Activated T-helper 1 cell treated with anti-CD3 and anti-CD28 coated beads, Interleukin-12 subunit alpha, Interleukin-12 subunit beta, Interleukin-2, Interleukin-4 antibody, amounts not matched to agents 30 ng/mL and 10 ng/mL and 1 ng/mL, durations not matched to agents 14 hours and 24 hours and 36 hours (primary cell): ENCODE measurements at regions of chr12 and their contacts with region 1.

Region 1: DNA sequence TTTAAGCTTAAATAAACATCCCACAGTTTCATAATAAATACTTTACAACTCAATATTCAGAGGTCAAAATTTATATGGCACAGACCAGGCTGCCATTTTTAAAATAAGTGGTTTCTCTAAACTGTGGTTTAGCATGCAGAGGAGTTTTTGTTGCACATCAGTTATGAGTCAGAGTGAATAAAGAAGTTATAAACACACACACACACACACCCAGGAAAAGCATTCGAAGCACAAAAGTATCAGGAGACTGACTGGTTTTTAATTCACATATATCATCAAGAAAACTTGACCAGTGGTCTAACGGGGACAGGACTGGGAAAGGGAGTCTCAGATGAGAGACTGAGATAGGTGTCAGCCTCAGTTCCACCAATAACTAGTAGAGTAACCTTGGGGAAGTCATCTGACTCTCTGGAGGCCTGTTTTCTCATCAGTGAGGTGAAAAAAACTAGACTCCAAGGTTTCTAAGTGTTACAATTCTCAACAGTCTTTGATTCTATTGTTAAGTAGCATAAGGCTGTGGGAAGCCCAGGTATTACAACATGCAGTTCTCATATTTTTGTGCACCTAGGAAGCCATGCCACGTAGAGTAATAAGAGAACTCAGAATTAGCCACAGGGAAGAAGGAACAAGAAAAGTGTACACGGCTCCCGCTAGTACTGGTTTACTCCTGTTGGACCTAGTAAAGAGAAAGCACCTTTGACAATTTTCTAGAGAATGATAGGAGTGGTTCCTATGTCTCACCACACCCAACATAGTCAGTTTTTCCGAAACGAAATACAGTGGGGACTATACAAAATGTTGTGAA is 5.2 kb downstream of the PPTC7 start:
- DNase-seq: peak; percentile 51
- H3K4me3 Mint-ChIP-seq: peak overlapping the region; percentile 95
- H3K27ac Mint-ChIP-seq: peak overlapping the region; percentile 98
- H3K4me1 Mint-ChIP-seq: peaks cover 70% of the 10 kb centered on the region
- H3K27me3 Mint-ChIP-seq: no peaks in the 10 kb centered on the region

Region 2: GRCh38 chr12:109987615-109988014 is 590.3 kb before region 1 on chr12:
- intact Hi-C with region 1: loop called (anchors 5 kb)
- DNase-seq: no peak
- H3K4me3 Mint-ChIP-seq: peak overlapping the region; percentile 1
- H3K27ac Mint-ChIP-seq: peak overlapping the region; percentile 84
- H3K4me1 Mint-ChIP-seq: peaks cover 57% of the 10 kb centered on the region
- H3K27me3 Mint-ChIP-seq: no peaks in the 10 kb centered on the region

Region 3: GRCh38 chr12:110501752-110502738 is 75.9 kb before region 1 on chr12 and contains the starts of genes RAD9B and VPS29:
- intact Hi-C with region 1: loop called (anchors 1 kb)
- DNase-seq: peak; percentile 99
- H3K4me3 Mint-ChIP-seq: peak within 1 kb of the TSS; percentile 90
- H3K27ac Mint-ChIP-seq: peak within 1 kb of the TSS; percentile 90
- H3K4me1 Mint-ChIP-seq: peaks cover 29% of the 10 kb centered on the region
- H3K27me3 Mint-ChIP-seq: no peaks in the 10 kb centered on the region
- total RNA-seq, gene RAD9B: 0.88 and 1.4 TPM in 2 replicates
- total RNA-seq, gene VPS29: 109 and 111 TPM in 2 replicates

Region 4: GRCh38 chr12:110555577-110556406 is 22.1 kb before region 1 on chr12:
- intact Hi-C with region 1: loop called (anchors 1 kb)
- DNase-seq: no peak
- H3K4me3 Mint-ChIP-seq: no peak overlapping the region
- H3K27ac Mint-ChIP-seq: peak overlapping the region; percentile 57
- H3K4me1 Mint-ChIP-seq: peaks cover 58% of the 10 kb centered on the region
- H3K27me3 Mint-ChIP-seq: no peaks in the 10 kb centered on the region

Region 5: DNA sequence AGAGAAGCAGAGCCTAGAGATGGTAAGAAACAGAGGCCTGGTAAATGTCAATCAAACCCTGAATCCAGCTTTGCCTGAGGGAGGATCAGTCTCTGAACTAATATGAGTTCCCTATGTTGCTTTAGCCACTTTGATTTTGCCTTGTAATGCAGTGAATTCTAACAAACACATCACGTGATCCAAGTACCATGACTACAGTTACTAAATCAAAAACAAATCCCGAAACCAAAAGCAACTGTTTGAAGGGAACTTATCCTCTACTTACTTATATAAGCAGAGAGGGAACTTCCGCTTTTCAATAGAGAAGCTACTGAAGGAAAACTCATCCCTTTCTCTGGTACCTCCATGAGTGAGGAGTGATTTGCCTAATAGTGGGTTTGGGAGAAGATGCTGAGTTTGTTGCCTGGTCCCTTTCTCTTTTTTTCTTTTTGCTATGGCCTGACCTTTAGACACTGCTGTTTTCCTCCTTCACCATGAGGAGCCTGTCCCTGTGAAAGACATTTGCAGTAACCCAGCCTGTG is 12.9 kb after region 1 on chr12:
- intact Hi-C with region 1: loop called (anchors 1 kb)
- DNase-seq: peak; percentile 24
- H3K4me3 Mint-ChIP-seq: peak overlapping the region; percentile 11
- H3K27ac Mint-ChIP-seq: peak overlapping the region; percentile 87
- H3K4me1 Mint-ChIP-seq: peaks cover 25% of the 10 kb centered on the region
- H3K27me3 Mint-ChIP-seq: no peaks in the 10 kb centered on the region

Region 6: GRCh38 chr12:110661337-110661972 is 83.5 kb after region 1 on chr12:
- intact Hi-C with region 1: no loop called
- DNase-seq: peak; percentile 30
- H3K4me3 Mint-ChIP-seq: peak overlapping the region; percentile 57
- H3K27ac Mint-ChIP-seq: peak overlapping the region; percentile 92
- H3K4me1 Mint-ChIP-seq: peaks cover 25% of the 10 kb centered on the region
- H3K27me3 Mint-ChIP-seq: no peaks in the 10 kb centered on the region

Region 7: DNA sequence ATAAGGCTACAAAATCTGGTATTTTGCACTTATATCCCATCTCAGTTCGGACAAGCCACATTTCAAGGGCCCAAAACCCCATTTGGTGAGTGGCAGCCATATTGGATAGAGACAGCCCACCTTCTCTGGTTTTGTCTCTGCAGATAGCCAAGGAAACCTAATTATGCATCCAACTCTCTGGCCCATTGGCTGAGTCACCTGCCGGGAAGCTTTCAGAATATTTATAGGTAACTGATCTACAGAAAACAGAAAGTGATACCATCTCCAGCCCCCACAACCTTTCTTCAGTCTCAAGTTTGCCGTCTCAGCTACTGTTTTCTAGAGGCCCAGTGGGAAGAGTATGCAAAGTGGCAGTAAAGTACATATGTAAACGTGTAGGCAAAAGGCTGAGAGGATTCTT is 198.5 kb after region 1 on chr12:
- intact Hi-C with region 1: loop called (anchors 1 kb)
- DNase-seq: peak; percentile 43
- H3K4me3 Mint-ChIP-seq: peak overlapping the region; percentile 40
- H3K27ac Mint-ChIP-seq: peak overlapping the region; percentile 99
- H3K4me1 Mint-ChIP-seq: peaks cover 72% of the 10 kb centered on the region
- H3K27me3 Mint-ChIP-seq: no peaks in the 10 kb centered on the region